BJ (cell line): ENCODE measurements at regions of chr10 and their contacts with region 1.

Region 1: DNA sequence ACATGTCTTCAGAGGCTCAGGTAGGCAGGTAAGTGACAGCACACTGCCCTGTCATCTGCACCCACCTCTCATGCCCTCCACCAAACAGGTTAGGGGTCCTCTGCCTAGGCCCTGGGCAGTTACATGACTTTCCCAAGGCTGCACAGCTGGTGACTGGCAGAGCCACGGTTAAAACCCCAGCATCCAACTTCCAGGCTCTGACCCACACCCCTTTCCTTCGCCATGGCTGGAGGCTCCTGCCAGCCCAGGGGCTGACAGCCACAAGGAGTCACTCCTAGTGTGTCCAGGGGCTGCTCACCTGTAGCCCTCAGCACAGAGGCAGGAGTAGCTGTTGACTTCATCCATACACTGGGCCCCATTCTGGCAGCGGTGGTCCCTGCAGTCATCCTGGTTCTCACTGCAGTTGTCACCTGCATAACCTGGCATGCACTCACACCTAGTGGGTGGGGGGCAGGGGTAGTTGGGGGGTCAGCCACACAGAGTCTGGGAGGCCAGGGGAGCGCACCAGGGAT is 175.0 kb downstream of the SLIT1 start:
- DNase-seq: no peak
- H3K4me3 ChIP-seq: no peak overlapping the region
- H3K27me3 ChIP-seq: peaks cover 7% of the 10 kb centered on the region
- CTCF ChIP-seq: no peak

Region 2: GRCh38 chr10:96991313-96991841 is 19.4 kb before region 1 on chr10:
- CTCF ChIA-PET with region 1: no interaction called
- POLR2A ChIA-PET with region 1: no interaction called
- DNase-seq: peak; percentile 63
- H3K4me3 ChIP-seq: no peak overlapping the region
- H3K27me3 ChIP-seq: no peaks in the 10 kb centered on the region
- CTCF ChIP-seq: no peak

Region 3: GRCh38 chr10:97025613-97026242 is 15.0 kb after region 1 on chr10:
- CTCF ChIA-PET with region 1: interaction called, 21 read pairs
- POLR2A ChIA-PET with region 1: no interaction called
- DNase-seq: no peak
- H3K4me3 ChIP-seq: no peak overlapping the region
- H3K27me3 ChIP-seq: peaks cover 10% of the 10 kb centered on the region
- CTCF ChIP-seq: peak; percentile 53

Region 4: DNA sequence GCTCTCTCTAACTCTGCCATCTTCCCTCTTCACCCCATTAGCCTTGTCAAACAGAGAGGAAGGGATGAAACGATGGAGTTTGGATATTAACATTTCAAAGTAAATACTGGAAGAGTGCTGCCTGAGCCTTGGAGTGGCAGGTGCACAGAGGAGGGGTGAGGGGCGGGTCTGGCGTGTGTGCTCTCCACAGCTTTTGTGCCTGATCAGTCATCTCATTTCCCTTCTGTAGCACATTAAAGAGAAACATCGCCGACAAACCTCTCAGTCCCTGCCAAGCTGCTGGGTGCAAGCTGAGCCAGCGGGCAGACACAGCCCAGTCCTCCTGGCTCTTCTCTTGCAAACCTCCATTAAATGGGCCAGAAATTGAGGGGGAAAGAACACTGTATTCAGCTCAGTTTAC is 98.8 kb after region 1 on chr10:
- CTCF ChIA-PET with region 1: no interaction called
- POLR2A ChIA-PET with region 1: no interaction called
- DNase-seq: no peak
- H3K4me3 ChIP-seq: no peak overlapping the region
- H3K27me3 ChIP-seq: peaks cover 6% of the 10 kb centered on the region
- CTCF ChIP-seq: no peak